ENCODE measurements at regions of chr15 and their contacts with region 1.

Region 1: GRCh38 chr15:63389902-63390670 is 8.4 kb upstream of the CA12 start:
- DNase-seq: peak; percentile 54
- H3K4me3 ChIP-seq: no peak overlapping the region
- H3K27ac ChIP-seq: no peak overlapping the region
- H3K4me1 ChIP-seq: peaks cover 24% of the 10 kb centered on the region
- H3K27me3 ChIP-seq: no peaks in the 10 kb centered on the region
- CTCF ChIP-seq: no peak

Region 2: DNA sequence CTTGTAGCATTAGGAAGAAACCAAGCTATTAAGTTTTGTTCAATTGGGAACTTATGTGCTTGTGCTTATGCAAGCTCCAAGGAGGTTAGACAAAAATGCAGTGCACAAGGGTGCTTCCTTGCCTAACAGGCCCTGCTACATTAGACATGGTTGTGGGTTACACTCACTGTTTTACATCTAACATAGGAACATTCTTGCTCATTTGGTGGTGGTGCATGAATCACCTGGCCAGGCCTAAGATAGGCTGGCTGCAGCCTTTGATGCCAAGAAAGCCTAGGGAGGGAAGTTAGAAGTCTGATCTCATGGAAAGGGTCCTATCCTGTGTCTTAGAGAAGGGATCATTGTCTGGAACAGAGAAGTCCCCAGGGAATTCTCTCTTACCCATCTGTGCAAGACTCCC is 51.9 kb before region 1 on chr15:
- CTCF ChIA-PET with region 1: no interaction called
- dilution Hi-C with region 1: loop called (anchors 5 kb)
- in situ Hi-C with region 1: loop called in 1 of 2 experiments (anchors 10 kb)
- intact Hi-C with region 1: no loop called
- DNase-seq: peak; percentile 89
- H3K4me3 ChIP-seq: no peak overlapping the region
- H3K27ac ChIP-seq: no peak overlapping the region
- H3K4me1 ChIP-seq: peaks cover 33% of the 10 kb centered on the region
- H3K27me3 ChIP-seq: no peaks in the 10 kb centered on the region
- CTCF ChIP-seq: no peak

Region 3: DNA sequence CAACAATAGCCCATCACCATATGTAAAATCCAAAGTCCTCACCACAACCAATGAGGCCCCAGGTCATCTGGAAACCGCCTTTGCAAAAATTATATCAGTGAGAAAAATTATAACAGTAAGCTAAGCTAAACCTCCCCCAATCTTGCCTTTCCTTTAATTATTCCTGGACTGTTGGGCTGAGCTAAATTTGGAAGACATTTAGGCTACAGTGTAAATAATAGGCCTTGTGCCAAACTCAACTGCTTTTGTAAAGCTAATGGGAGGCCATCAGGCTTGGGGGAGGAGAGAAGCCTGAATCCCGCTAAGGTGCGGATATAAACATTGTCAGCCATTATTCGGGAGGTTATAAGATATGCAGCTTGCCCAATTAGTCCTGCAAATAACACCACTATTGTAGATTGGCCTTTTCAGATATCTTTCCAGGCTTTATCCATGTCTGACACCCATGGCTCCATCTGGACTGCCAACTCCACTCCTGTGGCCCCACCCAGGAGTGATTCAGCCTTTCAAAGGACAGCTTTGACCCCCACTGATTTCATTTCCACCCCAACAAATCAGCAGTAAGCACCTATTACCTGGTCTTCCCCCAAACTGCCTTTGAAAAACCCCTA is 44.6 kb after region 1 on chr15:
- CTCF ChIA-PET with region 1: no interaction called
- dilution Hi-C with region 1: loop called (anchors 5 kb)
- in situ Hi-C with region 1: no loop called
- intact Hi-C with region 1: no loop called
- DNase-seq: no peak
- H3K4me3 ChIP-seq: no peak overlapping the region
- H3K27ac ChIP-seq: no peak overlapping the region
- H3K4me1 ChIP-seq: no peaks in the 10 kb centered on the region
- H3K27me3 ChIP-seq: no peaks in the 10 kb centered on the region
- CTCF ChIP-seq: no peak

Region 4: DNA sequence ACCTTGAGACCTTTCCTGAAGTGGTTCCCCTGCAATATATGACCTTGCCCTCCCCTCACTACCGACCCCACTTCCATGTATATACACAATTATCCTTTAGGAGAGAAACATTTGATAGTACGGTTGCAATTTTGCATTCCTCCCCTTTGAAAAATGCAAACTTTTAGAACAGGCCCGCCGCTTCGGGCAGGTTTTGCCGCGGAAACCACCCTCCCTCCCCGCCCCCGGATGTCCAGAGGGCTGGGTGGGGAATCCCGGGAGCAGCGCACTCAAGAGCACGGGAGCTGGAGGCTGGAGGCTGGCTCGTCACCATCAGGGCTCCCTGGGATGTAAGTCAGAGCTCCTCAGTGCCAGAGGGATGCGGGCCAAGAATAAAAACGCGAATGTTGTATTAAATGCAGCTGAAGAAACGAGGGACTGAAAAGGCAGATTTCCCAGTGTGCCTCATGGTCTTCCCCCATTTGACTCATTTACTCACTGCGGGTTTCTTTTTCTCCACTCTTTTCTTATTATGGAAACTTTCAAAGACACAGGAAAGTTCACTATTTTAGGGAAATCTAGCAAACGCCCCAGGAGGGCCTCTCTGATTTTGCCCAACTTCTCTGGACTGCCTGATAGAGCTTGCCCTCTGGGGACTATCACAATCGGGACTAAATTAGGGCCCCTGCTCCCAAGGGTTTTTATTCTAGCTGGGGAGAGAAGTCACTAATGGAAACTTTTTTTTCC is 111.3 kb after region 1 on chr15:
- CTCF ChIA-PET with region 1: no interaction called
- dilution Hi-C with region 1: no loop called
- in situ Hi-C with region 1: no loop called
- intact Hi-C with region 1: no loop called
- DNase-seq: peak; percentile 84
- H3K4me3 ChIP-seq: no peak overlapping the region
- H3K27ac ChIP-seq: peak overlapping the region; percentile 43
- H3K4me1 ChIP-seq: peaks cover 39% of the 10 kb centered on the region
- H3K27me3 ChIP-seq: no peaks in the 10 kb centered on the region
- CTCF ChIP-seq: no peak